Aorta (tissue), 5 donors: ENCODE measurements at regions of chr11 and their contacts with region 1.

Region 1: DNA sequence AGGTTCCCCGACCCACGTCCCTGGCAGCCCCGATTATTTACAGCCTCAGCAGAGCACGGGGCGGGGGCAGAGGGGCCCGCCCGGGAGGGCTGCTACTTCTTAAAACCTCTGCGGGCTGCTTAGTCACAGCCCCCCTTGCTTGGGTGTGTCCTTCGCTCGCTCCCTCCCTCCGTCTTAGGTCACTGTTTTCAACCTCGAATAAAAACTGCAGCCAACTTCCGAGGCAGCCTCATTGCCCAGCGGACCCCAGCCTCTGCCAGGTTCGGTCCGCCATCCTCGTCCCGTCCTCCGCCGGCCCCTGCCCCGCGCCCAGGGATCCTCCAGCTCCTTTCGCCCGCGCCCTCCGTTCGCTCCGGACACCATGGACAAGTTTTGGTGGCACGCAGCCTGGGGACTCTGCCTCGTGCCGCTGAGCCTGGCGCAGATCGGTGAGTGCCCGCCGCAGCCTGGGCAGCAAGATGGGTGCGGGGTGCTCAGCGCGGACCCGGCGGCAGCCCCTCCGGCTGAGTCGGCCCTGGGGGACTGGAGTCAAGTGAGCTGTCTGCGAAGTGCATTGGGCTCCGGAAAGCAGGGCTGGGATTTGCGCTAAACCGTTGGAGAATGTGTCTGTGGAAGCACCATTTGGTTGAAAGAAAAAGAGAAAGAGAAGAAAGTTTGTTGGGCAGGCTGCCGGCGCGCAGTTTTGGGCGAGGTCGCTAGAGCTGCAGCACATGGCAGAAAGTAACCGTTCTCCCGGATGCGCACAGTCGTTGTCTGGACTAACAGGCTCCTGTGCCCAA is at the start of gene CD44:
- DNase-seq: peak; percentile 89 to 90
- ATAC-seq: peak; percentile 85
- H3K4me3 ChIP-seq: peak within 1 kb of the TSS; percentile 73 to 74
- H3K27ac ChIP-seq: peak within 1 kb of the TSS; percentile 79 to 88
- H3K4me1 ChIP-seq: peaks cover 0 to 4% of the 10 kb centered on the region in 2 donors
- H3K27me3 ChIP-seq: no peaks in the 10 kb centered on the region
- total RNA-seq, gene CD44: 321 to 462 TPM

Region 2: DNA sequence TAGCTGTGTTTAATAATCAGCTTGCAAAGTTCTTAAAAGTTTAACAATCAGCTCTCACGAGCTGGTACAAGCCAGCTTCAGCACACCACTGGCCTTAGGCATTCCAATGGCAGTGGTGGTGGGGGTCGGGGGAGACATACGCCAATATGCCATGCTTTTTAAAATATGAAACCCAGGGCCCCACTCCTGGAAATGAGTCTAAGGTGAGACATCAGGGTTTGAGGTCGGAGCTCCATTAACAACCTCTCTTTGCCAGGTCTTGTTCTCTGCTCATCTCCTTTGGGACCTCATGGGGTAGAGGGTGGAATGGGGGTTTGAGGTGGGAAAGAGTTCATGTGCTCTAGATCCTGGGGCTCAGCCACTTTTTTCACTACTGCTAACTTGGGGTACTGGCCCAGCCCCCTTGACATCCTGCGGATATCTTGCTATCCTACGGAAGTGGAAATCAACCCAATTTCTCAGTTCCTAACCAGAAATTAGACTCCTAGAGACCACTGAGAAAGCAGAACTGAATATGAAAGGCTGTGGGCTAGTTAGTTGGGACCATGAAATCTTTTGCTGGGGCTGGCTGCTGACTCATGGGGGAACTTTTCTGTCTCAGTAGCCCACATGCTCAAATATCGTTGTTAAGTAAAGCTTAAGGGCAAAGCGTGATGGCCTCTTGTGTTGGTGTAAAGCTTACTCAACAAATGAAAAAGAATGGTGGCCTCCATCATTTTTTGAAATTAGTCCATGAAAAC is 132.6 kb before region 1 on chr11:
- intact Hi-C with region 1: loop called in 1 of 2 experiments (anchors 10 kb)
- DNase-seq: no peak
- ATAC-seq: no peak
- H3K4me3 ChIP-seq: no peak overlapping the region
- H3K27ac ChIP-seq: no peak overlapping the region
- H3K4me1 ChIP-seq: peaks cover 0 to 2% of the 10 kb centered on the region in 2 donors
- H3K27me3 ChIP-seq: no peaks in the 10 kb centered on the region

Region 3: GRCh38 chr11:35030716-35031213 is 108.4 kb before region 1 on chr11:
- intact Hi-C with region 1: no loop called
- DNase-seq: peak; percentile 75 to 80
- ATAC-seq: peak; percentile 48
- H3K4me3 ChIP-seq: no peak overlapping the region
- H3K27ac ChIP-seq: no peak overlapping the region
- H3K4me1 ChIP-seq: peaks cover 0 to 5% of the 10 kb centered on the region in 2 donors
- H3K27me3 ChIP-seq: no peaks in the 10 kb centered on the region

Region 4: DNA sequence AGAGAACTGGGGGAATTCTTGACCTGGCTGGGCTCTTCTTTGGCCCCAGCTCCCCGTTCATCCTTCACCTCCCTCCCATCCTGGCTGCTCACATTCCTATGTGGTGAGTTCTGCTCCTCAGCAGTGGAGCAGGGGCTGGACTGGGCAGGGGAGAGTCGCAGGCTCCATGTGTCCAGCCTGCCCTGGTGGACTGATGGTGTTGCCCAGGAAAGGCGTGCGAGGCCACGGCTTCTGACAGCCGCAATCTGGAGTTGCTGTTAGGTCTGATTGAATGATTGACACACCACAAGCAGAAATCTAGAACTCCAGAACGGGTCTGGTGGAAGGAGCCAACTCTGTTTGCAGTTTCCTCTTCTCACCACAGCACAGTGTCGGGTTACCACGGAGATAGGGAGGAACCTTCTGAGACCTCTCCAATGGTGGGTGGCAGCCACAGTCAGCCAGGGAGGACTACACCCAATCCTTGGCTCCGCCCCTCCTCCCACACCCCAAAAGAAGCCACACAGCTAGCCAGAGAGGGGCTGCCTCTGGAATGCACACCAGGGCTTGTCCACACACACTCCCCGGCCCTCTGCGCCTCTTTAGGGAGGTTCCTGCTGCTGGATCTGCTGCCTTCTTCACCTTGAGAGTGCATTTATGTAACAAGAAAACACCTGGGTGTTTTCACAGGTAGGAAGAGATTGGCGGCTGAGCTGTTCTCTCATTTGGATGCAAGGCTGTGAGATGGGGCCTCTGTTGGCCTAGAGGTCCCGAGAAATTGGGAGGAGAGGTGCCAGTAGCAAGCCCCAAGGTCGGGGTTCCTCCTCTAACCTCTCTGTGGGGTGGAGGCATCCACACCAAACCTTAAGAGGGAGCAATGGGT is 56.6 kb before region 1 on chr11:
- intact Hi-C with region 1: loop called in 1 of 2 experiments (anchors 5 kb)
- DNase-seq: peak; percentile 83 to 87
- ATAC-seq: peak; percentile 63
- H3K4me3 ChIP-seq: no peak overlapping the region
- H3K27ac ChIP-seq: peak overlapping the region; percentile 68 to 70
- H3K4me1 ChIP-seq: peaks cover 5 to 7% of the 10 kb centered on the region in 2 donors
- H3K27me3 ChIP-seq: no peaks in the 10 kb centered on the region

Region 5: DNA sequence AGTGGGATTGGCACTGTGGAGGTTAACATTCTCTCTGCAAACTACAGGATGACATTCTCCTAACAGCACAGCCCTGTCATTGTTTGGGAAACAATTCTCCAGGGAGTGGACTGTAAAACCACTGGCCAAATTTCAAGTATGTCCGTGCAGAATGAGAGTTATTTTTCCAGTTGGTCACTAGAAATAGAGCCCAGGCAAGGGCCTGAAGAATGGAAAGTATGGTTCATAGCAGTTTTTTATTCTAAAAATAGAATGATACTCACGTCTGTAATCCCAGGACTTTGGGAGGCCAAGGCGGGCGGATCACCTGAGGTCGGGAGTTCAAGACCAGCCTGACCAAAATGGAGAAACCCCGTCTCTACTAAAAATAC is 39.1 kb before region 1 on chr11:
- intact Hi-C with region 1: loop called (anchors 5 kb)
- DNase-seq: peak in 1 of 2 donors; percentile 75
- ATAC-seq: peak; percentile 91
- H3K4me3 ChIP-seq: no peak overlapping the region
- H3K27ac ChIP-seq: peak overlapping the region; percentile 12 to 93
- H3K4me1 ChIP-seq: peaks cover 9 to 10% of the 10 kb centered on the region in 2 donors
- H3K27me3 ChIP-seq: no peaks in the 10 kb centered on the region